Thyroid gland (tissue), 4 donors: ENCODE measurements at regions of chr7 and their contacts with region 1.

Region 1: DNA sequence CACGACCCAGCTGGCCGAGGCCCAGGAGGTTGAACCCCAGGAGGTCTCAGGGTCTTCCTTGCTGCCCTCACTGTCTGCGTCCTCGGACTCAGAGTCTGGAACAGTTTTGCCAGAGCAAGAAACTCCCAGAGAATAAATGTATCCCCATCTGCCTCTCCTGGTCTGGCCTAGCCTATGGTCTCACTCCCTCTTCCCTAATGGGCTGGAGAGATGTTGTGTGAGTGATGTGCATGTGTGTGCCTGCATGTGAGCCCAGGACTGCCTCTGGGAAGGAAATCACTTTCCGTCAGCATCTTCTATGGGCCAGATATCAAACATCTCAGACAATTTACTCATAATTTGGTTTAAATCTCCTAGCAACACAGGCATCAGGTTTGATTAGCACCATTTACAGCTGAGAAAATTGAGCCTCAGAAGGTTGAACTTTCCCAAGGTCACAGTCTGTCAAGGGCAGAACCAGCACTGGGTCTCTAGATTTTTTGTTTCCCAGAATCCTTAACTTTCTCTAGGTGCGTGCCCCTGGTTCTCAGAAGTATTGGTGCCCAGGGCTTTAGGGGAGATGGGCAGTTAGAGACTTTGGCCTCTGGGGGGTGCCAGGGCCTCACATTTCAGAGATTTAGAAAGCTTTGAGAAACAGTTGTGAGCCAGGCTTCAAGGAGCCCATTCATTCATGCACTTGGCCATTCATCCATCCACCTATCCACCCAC is 4.9 kb downstream of the TMEM270 start:
- DNase-seq: peak; percentile 46 to 55
- H3K4me3 ChIP-seq: no peak overlapping the region
- H3K27ac ChIP-seq: no peak overlapping the region
- H3K4me1 ChIP-seq: peaks cover 8 to 20% of the 10 kb centered on the region in 2 donors
- H3K27me3 ChIP-seq: no peaks in the 10 kb centered on the region
- CTCF ChIP-seq: peak in 4 of 6 experiments; percentile 32 to 61 (median 59)
- POLR2A ChIP-seq: no peak

Region 2: GRCh38 chr7:73304071-73304470 is 561.8 kb before region 1 on chr7:
- intact Hi-C with region 1: no loop called
- DNase-seq: no peak
- H3K4me3 ChIP-seq: no peak overlapping the region
- H3K27ac ChIP-seq: no peak overlapping the region
- H3K4me1 ChIP-seq: peaks cover 3 to 9% of the 10 kb centered on the region in 2 donors
- H3K27me3 ChIP-seq: no peaks in the 10 kb centered on the region
- CTCF ChIP-seq: no peak
- POLR2A ChIP-seq: no peak

Region 3: GRCh38 chr7:74026903-74027551 is 161.1 kb after region 1 on chr7:
- intact Hi-C with region 1: loop called (anchors 5 kb)
- DNase-seq: peak; percentile 76 to 81
- H3K4me3 ChIP-seq: peak overlapping the region in 1 of 3 donors; percentile 21
- H3K27ac ChIP-seq: peak overlapping the region; percentile 44 to 68 (median 50)
- H3K4me1 ChIP-seq: peaks cover 14 to 40% of the 10 kb centered on the region in 2 donors
- H3K27me3 ChIP-seq: no peaks in the 10 kb centered on the region
- CTCF ChIP-seq: peak; percentile 77 to 98 (median 82)
- POLR2A ChIP-seq: no peak

Region 4: DNA sequence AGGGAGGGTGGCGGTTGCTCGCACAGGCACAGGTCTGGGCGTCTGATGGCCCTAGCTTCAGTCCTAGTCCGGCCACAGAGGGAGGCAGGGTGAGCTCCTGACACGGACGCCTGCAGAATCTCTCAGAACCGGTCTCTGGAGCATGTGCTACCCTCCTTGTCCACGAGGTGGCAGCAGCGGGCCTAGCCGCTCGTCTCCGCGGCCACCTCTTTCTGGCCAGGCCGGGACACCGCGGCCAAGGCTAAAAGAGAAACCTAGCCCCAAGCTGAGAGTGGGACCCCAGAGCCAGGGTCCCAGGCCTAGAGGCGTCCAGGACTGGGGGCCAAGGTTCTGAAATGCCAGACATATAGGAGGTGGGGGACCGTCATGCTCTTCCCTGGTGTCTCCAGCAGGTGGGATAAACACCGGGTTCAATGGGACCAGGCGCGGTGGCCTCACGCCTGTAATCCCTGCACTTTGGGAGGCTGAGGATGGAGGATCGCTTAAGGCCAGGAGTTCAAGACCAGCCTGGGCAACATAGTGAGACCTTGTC is 340.8 kb after region 1 on chr7:
- intact Hi-C with region 1: loop called (anchors 10 kb)
- DNase-seq: peak; percentile 86 to 89
- H3K4me3 ChIP-seq: no peak overlapping the region
- H3K27ac ChIP-seq: no peak overlapping the region
- H3K4me1 ChIP-seq: no peaks in the 10 kb centered on the region
- H3K27me3 ChIP-seq: no peaks in the 10 kb centered on the region
- CTCF ChIP-seq: peak; percentile 86 to 100 (median 92)
- POLR2A ChIP-seq: no peak